Caco-2 (cell line): ENCODE measurements at regions of chr18 and their contacts with region 1.

Region 1: GRCh38 chr18:62131301-62131909 is 55.5 kb downstream of the PIGN start:
- DNase-seq: peak; percentile 33 to 50
- H3K4me3 ChIP-seq: no peak overlapping the region
- H3K4me3 Mint-ChIP-seq: no peak overlapping the region
- H3K27ac Mint-ChIP-seq: no peak overlapping the region
- H3K4me1 ChIP-seq: no peaks in the 10 kb centered on the region
- H3K4me1 Mint-ChIP-seq: no peaks in the 10 kb centered on the region
- H3K27me3 ChIP-seq: no peaks in the 10 kb centered on the region
- H3K27me3 Mint-ChIP-seq: no peaks in the 10 kb centered on the region
- CTCF ChIP-seq: peak; percentile 69 to 80

Region 2: GRCh38 chr18:61322265-61322873 is 809.0 kb before region 1 on chr18:
- CTCF ChIA-PET with region 1: interaction called, 3 read pairs
- POLR2A ChIA-PET with region 1: no interaction called
- intact Hi-C with region 1: loop called (anchors 5 kb)
- DNase-seq: peak; percentile 38 to 69
- H3K4me3 ChIP-seq: no peak overlapping the region
- H3K4me3 Mint-ChIP-seq: no peak overlapping the region
- H3K27ac Mint-ChIP-seq: no peak overlapping the region
- H3K4me1 ChIP-seq: no peaks in the 10 kb centered on the region
- H3K4me1 Mint-ChIP-seq: no peaks in the 10 kb centered on the region
- H3K27me3 ChIP-seq: no peaks in the 10 kb centered on the region
- H3K27me3 Mint-ChIP-seq: peaks cover 10% of the 10 kb centered on the region
- CTCF ChIP-seq: peak; percentile 51 to 71

Region 3: GRCh38 chr18:61551586-61551985 is 579.8 kb before region 1 on chr18:
- CTCF ChIA-PET with region 1: no interaction called
- POLR2A ChIA-PET with region 1: no interaction called
- intact Hi-C with region 1: loop called (anchors 1 kb)
- DNase-seq: peak in 1 of 2 experiments; percentile 56
- H3K4me3 ChIP-seq: no peak overlapping the region
- H3K4me3 Mint-ChIP-seq: no peak overlapping the region
- H3K27ac Mint-ChIP-seq: no peak overlapping the region
- H3K4me1 ChIP-seq: no peaks in the 10 kb centered on the region
- H3K4me1 Mint-ChIP-seq: no peaks in the 10 kb centered on the region
- H3K27me3 ChIP-seq: no peaks in the 10 kb centered on the region
- H3K27me3 Mint-ChIP-seq: no peaks in the 10 kb centered on the region
- CTCF ChIP-seq: peak; percentile 65 to 67

Region 4: DNA sequence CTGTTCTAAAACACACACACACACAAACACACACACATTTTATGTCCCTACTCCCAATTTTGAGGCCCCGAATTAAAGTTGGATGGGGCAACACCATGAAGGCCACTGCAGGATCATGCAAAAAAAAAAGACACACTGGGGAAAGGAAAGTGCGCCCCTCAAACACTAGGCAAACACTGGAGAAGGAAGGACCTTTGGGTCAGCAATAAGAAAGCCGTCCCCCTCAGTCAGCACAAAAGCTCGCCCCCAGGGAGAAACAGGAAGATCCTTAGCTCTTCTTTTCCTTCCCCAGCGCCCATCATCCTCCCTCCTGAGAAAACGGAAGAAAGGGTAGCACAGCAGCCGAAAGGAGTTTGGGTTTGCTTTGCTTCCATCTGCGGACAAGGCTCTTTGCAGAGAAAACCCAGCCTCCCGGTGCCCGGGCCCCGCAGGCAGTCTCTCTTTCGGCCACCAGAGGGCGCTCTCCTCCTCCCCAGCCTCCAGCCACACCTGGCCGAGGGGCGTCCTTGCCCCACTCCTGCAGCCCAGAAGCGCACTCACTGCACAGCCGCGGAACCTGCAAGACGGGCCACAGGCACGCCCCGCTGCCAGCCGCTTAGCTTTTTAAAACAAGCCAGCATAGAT is 549.7 kb before region 1 on chr18:
- CTCF ChIA-PET with region 1: no interaction called
- POLR2A ChIA-PET with region 1: no interaction called
- intact Hi-C with region 1: loop called (anchors 1 kb)
- DNase-seq: peak; percentile 55 to 73
- H3K4me3 ChIP-seq: peak overlapping the region; percentile 28
- H3K4me3 Mint-ChIP-seq: peak overlapping the region; percentile 64
- H3K27ac Mint-ChIP-seq: peak overlapping the region; percentile 32
- H3K4me1 ChIP-seq: no peaks in the 10 kb centered on the region
- H3K4me1 Mint-ChIP-seq: no peaks in the 10 kb centered on the region
- H3K27me3 ChIP-seq: no peaks in the 10 kb centered on the region
- H3K27me3 Mint-ChIP-seq: no peaks in the 10 kb centered on the region
- CTCF ChIP-seq: peak; percentile 79 to 80

Region 5: GRCh38 chr18:61635901-61636528 is 495.4 kb before region 1 on chr18:
- CTCF ChIA-PET with region 1: no interaction called
- POLR2A ChIA-PET with region 1: no interaction called
- intact Hi-C with region 1: loop called (anchors 1 kb)
- DNase-seq: peak; percentile 46 to 50
- H3K4me3 ChIP-seq: no peak overlapping the region
- H3K4me3 Mint-ChIP-seq: no peak overlapping the region
- H3K27ac Mint-ChIP-seq: no peak overlapping the region
- H3K4me1 ChIP-seq: no peaks in the 10 kb centered on the region; the same call in 1 of the 2 replicates
- H3K4me1 Mint-ChIP-seq: peaks cover 7% of the 10 kb centered on the region
- H3K27me3 ChIP-seq: no peaks in the 10 kb centered on the region
- H3K27me3 Mint-ChIP-seq: no peaks in the 10 kb centered on the region
- CTCF ChIP-seq: peak; percentile 53 to 55

Region 6: GRCh38 chr18:61901323-61901986 is 229.9 kb before region 1 on chr18:
- CTCF ChIA-PET with region 1: no interaction called
- POLR2A ChIA-PET with region 1: no interaction called
- intact Hi-C with region 1: loop called (anchors 2 kb)
- DNase-seq: peak; percentile 34 to 45
- H3K4me3 ChIP-seq: no peak overlapping the region
- H3K4me3 Mint-ChIP-seq: no peak overlapping the region
- H3K27ac Mint-ChIP-seq: no peak overlapping the region
- H3K4me1 ChIP-seq: no peaks in the 10 kb centered on the region
- H3K4me1 Mint-ChIP-seq: peaks cover 9% of the 10 kb centered on the region
- H3K27me3 ChIP-seq: no peaks in the 10 kb centered on the region
- H3K27me3 Mint-ChIP-seq: no peaks in the 10 kb centered on the region
- CTCF ChIP-seq: peak; percentile 55 to 77